K562 (cell line): ENCODE measurements at regions of chr3 and their contacts with region 1.

Region 1: DNA sequence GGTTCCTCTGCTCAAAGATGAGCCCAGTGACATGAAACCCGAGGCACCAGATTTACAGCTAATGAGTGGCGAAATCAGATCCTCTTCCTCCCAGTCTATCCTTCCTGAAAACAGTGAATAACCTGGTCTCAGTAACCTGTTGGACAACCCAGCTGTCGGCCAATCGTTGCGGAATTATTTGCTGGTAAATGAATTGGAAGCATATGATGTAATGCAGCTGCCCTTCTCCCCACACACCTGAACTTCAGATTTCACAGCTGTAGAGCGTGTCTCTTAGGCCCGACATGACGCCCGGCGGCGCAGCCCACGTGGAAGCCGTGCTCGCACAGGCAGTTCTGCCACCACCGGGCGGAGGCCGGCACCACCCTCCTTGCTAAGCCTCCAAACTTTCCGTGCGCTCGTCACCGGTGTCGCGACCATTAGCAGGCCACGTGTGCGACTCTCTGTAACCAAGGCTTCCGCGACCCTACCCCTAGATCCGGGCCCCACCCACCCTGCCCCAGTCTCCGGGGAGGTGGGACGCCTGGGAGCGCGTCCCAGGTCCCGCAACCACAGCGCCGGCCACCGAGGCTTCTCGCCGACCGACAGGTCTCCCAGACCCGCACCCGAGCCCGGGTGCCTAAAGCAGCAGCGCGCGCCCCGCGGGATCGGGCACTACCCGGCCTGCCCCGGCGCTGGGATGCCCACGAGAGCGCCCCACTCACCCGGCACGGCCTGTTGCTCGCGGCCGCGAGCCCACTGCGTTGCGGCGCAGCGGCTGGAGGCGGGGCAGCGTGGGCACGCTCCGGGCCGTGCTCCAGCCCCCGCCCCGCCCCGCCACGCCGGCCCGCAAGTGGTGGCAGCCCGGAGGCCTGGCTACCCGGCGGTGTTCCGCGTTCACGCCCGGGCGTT is at the start of gene RIOX2:
- DNase-seq: peak; percentile 66 to 76 (median 70)
- ATAC-seq: peak; percentile 91
- H3K4me3 ChIP-seq: peak within 1 kb of the TSS; percentile 62
- H3K27ac ChIP-seq: peak within 1 kb of the TSS; percentile 25
- H3K4me1 ChIP-seq: peaks cover 0 to 11% of the 10 kb centered on the region in 2 experiments; a peak in 4 of 5 replicates
- H3K27me3 ChIP-seq: no peaks in the 10 kb centered on the region
- CTCF ChIP-seq: no peak
- EP300 ChIP-seq: no peak
- POLR2A ChIP-seq: peak; percentile 63; the same call in 1 of the 2 replicates
- RAD21 ChIP-seq: no peak
- polyA plus RNA-seq, gene RIOX2: 32.6 to 56.0 TPM

Region 2: GRCh38 chr3:97910931-97911351 is 61.0 kb before region 1 on chr3:
- CTCF ChIA-PET with region 1: no interaction called
- POLR2A ChIA-PET with region 1: no interaction called
- in situ Hi-C with region 1: no loop called
- intact Hi-C with region 1: loop called (anchors 5 kb)
- DNase-seq: peak; percentile 40 to 73 (median 53)
- ATAC-seq: peak; percentile 98
- H3K4me3 ChIP-seq: no peak overlapping the region
- H3K27ac ChIP-seq: peak overlapping the region; percentile 57; the same call in 1 of the 3 replicates
- H3K4me1 ChIP-seq: peaks cover 0 to 10% of the 10 kb centered on the region in 2 experiments; a peak in 2 of 5 replicates
- H3K27me3 ChIP-seq: no peaks in the 10 kb centered on the region
- CTCF ChIP-seq: no peak
- EP300 ChIP-seq: peak; percentile 55; the same call in 1 of the 2 replicates
- POLR2A ChIP-seq: no peak
- RAD21 ChIP-seq: no peak

Region 3: DNA sequence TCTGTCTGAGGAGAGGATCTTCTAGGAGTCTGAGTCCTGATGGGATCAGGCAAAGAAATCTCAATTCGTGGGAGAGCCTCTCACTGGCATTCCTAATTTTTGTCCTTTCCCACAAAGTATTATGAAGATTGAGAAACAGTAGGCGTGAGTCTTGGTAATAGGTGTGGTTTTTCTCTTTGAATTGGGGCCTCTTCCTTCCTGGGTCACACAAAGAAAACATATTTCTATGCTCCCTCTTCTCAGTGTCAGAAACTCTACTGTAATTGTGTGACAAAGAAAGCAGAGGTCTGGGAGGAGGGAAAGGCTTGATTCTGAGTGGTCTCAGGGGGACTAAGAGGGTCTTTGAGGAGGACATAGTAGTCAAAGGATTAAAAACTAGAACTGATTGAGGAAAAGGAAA is 57.2 kb after region 1 on chr3:
- CTCF ChIA-PET with region 1: no interaction called
- POLR2A ChIA-PET with region 1: no interaction called
- in situ Hi-C with region 1: no loop called
- intact Hi-C with region 1: no loop called
- DNase-seq: no peak
- ATAC-seq: no peak
- H3K4me3 ChIP-seq: no peak overlapping the region
- H3K27ac ChIP-seq: no peak overlapping the region
- H3K4me1 ChIP-seq: no peaks in the 10 kb centered on the region
- H3K27me3 ChIP-seq: no peaks in the 10 kb centered on the region
- CTCF ChIP-seq: no peak
- EP300 ChIP-seq: no peak
- POLR2A ChIP-seq: no peak
- RAD21 ChIP-seq: no peak